CD4-positive, alpha-beta T cell (primary cell): ENCODE measurements at regions of chr5 and their contacts with region 1.

Region 1: DNA sequence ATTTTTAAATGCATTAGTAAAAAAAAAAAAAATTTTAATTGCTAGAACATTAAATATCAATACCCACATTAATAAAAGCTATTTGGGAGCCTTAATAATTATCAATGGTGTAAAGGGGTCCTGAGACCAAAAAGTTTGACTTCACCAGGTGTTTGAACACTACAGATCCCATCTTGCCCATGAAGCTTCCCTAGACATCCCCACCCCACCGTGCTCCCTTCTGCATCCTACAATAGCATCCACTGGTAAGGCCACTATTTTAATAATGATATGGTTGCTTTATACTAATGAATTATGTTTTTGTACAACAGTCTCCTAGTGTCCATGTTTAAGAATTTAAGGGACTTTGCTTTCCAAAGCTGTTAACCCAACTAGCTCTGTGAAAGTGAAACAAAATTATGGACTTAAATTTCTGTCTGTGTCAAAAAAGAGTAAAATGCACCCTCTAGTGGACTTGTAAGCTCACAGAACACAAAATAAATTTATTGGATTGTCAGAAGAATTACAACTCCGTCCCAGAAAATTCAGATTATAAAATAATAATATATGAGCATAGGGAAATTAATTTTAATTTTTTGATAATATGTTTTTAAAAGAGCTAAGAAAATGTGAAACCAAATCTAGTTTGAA is 76.0 kb downstream of the ARL15 start:
- DNase-seq: peak in 1 of 14 experiments; percentile 26
- ATAC-seq: no peak
- H3K4me3 ChIP-seq: no peak overlapping the region
- H3K4me3 Mint-ChIP-seq: no peak overlapping the region
- H3K27ac ChIP-seq: no peak overlapping the region
- H3K27ac Mint-ChIP-seq: no peak overlapping the region
- H3K4me1 ChIP-seq: no peaks in the 10 kb centered on the region
- H3K4me1 Mint-ChIP-seq: peaks cover 5% of the 10 kb centered on the region
- H3K27me3 ChIP-seq: no peaks in the 10 kb centered on the region
- H3K27me3 Mint-ChIP-seq: no peaks in the 10 kb centered on the region
- CTCF ChIP-seq: peak; percentile 36

Region 2: DNA sequence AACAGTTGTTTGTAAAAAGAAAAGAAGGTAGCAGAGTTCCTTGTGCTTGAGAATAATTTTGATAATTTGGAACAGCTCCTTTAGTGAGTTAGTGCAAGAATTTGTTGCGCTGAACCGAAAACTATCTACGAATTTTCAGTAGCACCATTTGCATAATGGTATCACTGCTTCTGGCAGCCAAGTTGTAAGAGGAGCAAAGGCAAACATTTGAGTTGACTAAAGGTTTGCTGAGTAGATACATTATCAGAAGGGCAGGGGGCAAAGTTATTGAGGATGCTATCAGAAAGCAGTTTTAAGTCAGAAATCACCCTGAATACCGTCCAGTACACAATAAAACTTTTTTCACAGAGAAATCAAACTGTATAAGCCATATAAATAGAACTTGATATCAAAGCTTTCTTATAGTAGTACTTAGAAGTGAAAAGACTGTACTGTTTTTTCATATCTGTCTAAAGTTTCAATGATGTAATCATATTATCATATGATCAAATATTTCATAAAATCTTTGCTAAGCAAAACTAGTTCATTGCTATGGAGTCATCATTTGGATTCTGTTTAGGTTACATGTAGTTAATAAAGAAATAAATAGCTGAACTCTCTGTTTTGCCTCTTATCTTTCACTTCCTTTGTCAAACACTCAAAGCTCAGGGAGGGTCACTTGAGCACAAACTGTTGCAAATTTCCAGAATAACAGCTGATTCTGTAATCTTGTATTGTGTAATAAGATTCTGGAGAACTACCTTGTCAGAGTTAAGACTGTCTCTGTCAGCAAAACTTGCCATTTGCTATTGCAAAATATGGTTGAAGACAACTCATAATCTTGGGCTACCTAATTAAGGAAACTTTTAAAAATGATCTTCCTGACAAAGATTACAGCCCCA is 943.1 kb before region 1 on chr5:
- CTCF ChIA-PET with region 1: no interaction called
- POLR2A ChIA-PET with region 1: no interaction called
- intact Hi-C with region 1: no loop called
- DNase-seq: no peak
- ATAC-seq: no peak
- H3K4me3 ChIP-seq: no peak overlapping the region
- H3K4me3 Mint-ChIP-seq: no peak overlapping the region
- H3K27ac ChIP-seq: no peak overlapping the region
- H3K27ac Mint-ChIP-seq: no peak overlapping the region
- H3K4me1 ChIP-seq: no peaks in the 10 kb centered on the region
- H3K4me1 Mint-ChIP-seq: no peaks in the 10 kb centered on the region
- H3K27me3 ChIP-seq: no peaks in the 10 kb centered on the region
- H3K27me3 Mint-ChIP-seq: peaks cover 9% of the 10 kb centered on the region
- CTCF ChIP-seq: no peak

Region 3: GRCh38 chr5:53481887-53482716 is 752.3 kb before region 1 on chr5:
- CTCF ChIA-PET with region 1: no interaction called
- POLR2A ChIA-PET with region 1: no interaction called
- intact Hi-C with region 1: loop called (anchors 5 kb)
- DNase-seq: peak in 12 of 14 experiments; percentile 17 to 72 (median 40)
- ATAC-seq: peak; percentile 70
- H3K4me3 ChIP-seq: peak overlapping the region; percentile 56
- H3K4me3 Mint-ChIP-seq: peak overlapping the region; percentile 93
- H3K27ac ChIP-seq: no peak overlapping the region
- H3K27ac Mint-ChIP-seq: peak overlapping the region; percentile 53
- H3K4me1 ChIP-seq: peaks cover 40% of the 10 kb centered on the region
- H3K4me1 Mint-ChIP-seq: peaks cover 46% of the 10 kb centered on the region
- H3K27me3 ChIP-seq: peaks cover 30 to 40% of the 10 kb centered on the region in 2 experiments
- H3K27me3 Mint-ChIP-seq: peaks cover 67% of the 10 kb centered on the region
- CTCF ChIP-seq: no peak

Region 4: GRCh38 chr5:54302267-54302687 is 67.9 kb after region 1 on chr5:
- CTCF ChIA-PET with region 1: no interaction called
- POLR2A ChIA-PET with region 1: no interaction called
- intact Hi-C with region 1: no loop called
- DNase-seq: peak in 2 of 14 experiments; percentile 49 to 52
- ATAC-seq: no peak
- H3K4me3 ChIP-seq: no peak overlapping the region
- H3K4me3 Mint-ChIP-seq: no peak overlapping the region
- H3K27ac ChIP-seq: no peak overlapping the region
- H3K27ac Mint-ChIP-seq: no peak overlapping the region
- H3K4me1 ChIP-seq: peaks cover 11% of the 10 kb centered on the region
- H3K4me1 Mint-ChIP-seq: peaks cover 49% of the 10 kb centered on the region
- H3K27me3 ChIP-seq: no peaks in the 10 kb centered on the region
- H3K27me3 Mint-ChIP-seq: no peaks in the 10 kb centered on the region
- CTCF ChIP-seq: no peak